Psoas muscle (tissue), 8 donors: ENCODE measurements at regions of chr7 and their contacts with region 1.

Region 1: GRCh38 chr7:56051339-56052191 is at the starts of genes CCT6A and PSPH:
- DNase-seq: peak; percentile 99
- ATAC-seq: peak; percentile 99
- H3K4me3 ChIP-seq: peak within 1 kb of the TSS; percentile 72
- H3K27ac ChIP-seq: peak within 1 kb of the TSS; percentile 80
- H3K4me1 ChIP-seq: peaks cover 37% of the 10 kb centered on the region
- H3K27me3 ChIP-seq: no peaks in the 10 kb centered on the region
- CTCF ChIP-seq: no peak
- total RNA-seq, gene CCT6A: 96.5 to 135 (median 130) TPM
- total RNA-seq, gene PSPH: 2.6 to 10.8 (median 5.1) TPM

Region 2: DNA sequence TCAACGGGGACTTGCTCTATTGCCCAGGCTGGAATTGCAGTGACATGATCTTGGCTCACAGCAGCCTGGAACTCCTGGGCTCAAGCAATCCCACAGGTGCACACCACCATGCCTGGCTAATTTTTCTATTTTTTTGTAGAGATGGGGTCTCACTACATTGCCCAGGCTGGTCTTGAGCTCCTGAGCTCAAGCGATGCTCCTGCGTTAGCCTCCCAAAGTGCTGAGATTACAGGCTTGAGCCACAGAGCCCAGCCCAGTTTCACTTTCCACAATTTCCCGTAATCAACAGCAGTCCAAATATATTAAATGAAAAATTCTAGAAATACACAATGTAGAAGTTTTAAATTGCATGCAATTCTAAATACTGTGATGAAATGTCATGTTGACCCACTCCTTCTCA is 213.0 kb before region 1 on chr7:
- intact Hi-C with region 1: no loop called
- DNase-seq: no peak
- ATAC-seq: no peak
- H3K4me3 ChIP-seq: no peak overlapping the region
- H3K27ac ChIP-seq: no peak overlapping the region
- H3K4me1 ChIP-seq: no peaks in the 10 kb centered on the region
- H3K27me3 ChIP-seq: no peaks in the 10 kb centered on the region
- CTCF ChIP-seq: no peak

Region 3: GRCh38 chr7:55977831-55978230 is 73.7 kb before region 1 on chr7:
- intact Hi-C with region 1: loop called in 1 of 2 experiments (anchors 5 kb)
- DNase-seq: no peak
- ATAC-seq: no peak
- H3K4me3 ChIP-seq: no peak overlapping the region
- H3K27ac ChIP-seq: peak overlapping the region; percentile 89
- H3K4me1 ChIP-seq: peaks cover 42% of the 10 kb centered on the region
- H3K27me3 ChIP-seq: no peaks in the 10 kb centered on the region
- CTCF ChIP-seq: no peak